CD14-positive monocyte (primary cell): ENCODE measurements at regions of chr5 and their contacts with region 1.

Region 1: DNA sequence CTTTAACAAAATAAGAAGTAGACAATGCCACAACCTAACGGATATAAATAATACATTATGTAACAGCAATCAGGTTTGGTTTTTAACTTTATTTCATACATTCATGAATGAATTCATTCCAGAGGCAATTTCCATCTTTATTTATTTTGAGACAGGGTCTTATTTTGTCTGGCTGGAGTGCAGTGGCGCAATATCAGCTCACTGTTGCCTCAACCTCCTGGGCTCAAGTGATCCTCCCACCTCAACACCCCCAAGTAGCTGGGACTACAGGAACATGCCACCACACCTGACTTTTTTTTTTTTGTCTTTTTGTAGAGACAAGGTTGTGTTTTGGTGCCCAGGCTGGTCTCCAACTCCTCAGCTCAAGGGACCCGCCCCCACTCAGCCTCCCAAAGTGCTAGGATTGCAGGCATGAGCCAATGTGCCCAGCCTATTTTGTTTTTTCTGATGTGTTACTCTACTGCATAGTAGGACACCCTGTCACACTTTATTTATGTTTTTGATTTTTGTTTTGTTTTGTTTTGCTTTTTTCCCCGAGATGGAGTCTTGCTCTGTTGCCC is 26.3 kb upstream of the C5orf24 start:
- DNase-seq: no peak
- H3K4me3 ChIP-seq: no peak overlapping the region
- H3K4me3 Mint-ChIP-seq: no peak overlapping the region
- H3K27ac ChIP-seq: no peak overlapping the region
- H3K27ac Mint-ChIP-seq: no peak overlapping the region
- H3K4me1 ChIP-seq: peaks cover 0 to under 1% of the 10 kb centered on the region in 2 donors
- H3K4me1 Mint-ChIP-seq: no peaks in the 10 kb centered on the region
- H3K27me3 ChIP-seq: no peaks in the 10 kb centered on the region
- H3K27me3 Mint-ChIP-seq: peaks cover 0 to 4% (median 0%) of the 10 kb centered on the region in 3 donors
- CTCF ChIP-seq: no peak

Region 2: DNA sequence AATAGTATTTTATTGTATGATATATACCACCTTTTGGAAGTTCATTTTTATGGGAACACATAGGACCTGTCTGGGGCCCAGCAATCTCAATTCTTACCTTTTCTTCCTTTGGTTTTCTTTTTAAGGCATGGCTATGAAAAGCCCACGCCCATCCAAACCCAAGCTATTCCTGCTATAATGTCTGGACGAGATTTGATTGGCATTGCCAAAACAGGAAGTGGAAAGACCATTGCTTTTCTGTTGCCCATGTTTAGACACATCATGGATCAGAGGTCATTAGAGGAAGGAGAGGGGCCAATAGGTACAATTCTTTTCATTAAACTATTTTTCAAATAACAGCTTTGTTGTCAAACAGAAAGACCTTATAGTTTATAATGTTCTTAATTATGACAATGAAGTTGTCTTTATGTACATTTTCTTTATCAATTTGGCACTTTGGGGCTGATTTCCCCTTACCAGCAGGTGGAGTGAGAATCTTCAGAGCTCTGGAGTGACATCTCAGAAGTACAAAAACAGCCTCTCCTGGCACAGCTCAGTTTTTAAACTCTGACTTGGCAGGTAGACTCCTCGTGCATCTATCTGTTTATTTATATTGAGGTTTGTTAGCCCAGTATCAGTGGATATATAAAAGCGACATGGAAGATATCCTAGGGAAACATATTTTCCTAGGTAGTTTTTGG is 35.1 kb before region 1 on chr5:
- intact Hi-C with region 1: loop called in 1 of 2 experiments (anchors 5 kb)
- DNase-seq: no peak
- H3K4me3 ChIP-seq: no peak overlapping the region
- H3K4me3 Mint-ChIP-seq: no peak overlapping the region
- H3K27ac ChIP-seq: no peak overlapping the region
- H3K27ac Mint-ChIP-seq: no peak overlapping the region
- H3K4me1 ChIP-seq: no peaks in the 10 kb centered on the region
- H3K4me1 Mint-ChIP-seq: no peaks in the 10 kb centered on the region
- H3K27me3 ChIP-seq: no peaks in the 10 kb centered on the region
- H3K27me3 Mint-ChIP-seq: no peaks in the 10 kb centered on the region
- CTCF ChIP-seq: no peak

Region 3: DNA sequence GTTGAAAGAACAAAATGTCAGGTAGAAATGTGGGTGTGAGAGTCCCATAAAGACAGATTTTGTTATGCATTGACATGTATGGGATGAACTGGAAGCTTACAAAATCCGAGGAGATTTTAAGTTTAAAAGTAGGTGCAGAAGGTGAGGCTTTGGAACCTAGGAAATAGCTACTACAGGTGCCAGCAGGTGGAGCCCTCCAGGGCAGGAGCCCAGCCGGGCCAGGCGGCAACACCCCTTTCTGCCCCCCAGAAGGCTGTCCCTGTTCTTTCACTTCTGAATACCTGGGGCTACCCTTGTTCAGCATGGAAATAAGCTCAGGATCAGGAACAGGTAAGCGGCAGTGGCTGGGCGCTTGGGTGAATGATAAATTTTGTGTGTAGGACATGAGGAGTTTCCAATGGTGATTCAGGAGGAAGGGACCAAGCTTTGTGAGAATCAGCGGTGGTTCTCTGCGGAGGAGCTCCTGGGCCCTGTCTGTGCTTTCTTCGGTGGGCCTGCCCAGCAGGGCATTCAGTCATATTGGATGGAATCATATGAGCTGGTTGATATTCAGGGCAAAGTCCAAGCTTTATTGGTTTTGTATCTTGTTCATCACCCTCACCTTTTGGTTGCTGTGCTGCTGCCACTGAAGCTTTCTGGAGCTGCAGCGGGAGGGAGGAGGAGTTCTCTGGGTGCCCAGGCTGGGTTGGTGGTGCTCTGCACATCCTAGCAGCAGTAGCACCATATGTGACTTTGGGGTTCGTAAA is 97.8 kb after region 1 on chr5:
- intact Hi-C with region 1: no loop called
- DNase-seq: no peak
- H3K4me3 ChIP-seq: no peak overlapping the region
- H3K4me3 Mint-ChIP-seq: no peak overlapping the region
- H3K27ac ChIP-seq: no peak overlapping the region
- H3K27ac Mint-ChIP-seq: peak overlapping the region in 1 of 7 donors; percentile 12
- H3K4me1 ChIP-seq: no peaks in the 10 kb centered on the region
- H3K4me1 Mint-ChIP-seq: no peaks in the 10 kb centered on the region
- H3K27me3 ChIP-seq: no peaks in the 10 kb centered on the region
- H3K27me3 Mint-ChIP-seq: no peaks in the 10 kb centered on the region
- CTCF ChIP-seq: no peak